H1 (cell line): ENCODE measurements at regions of chr3 and their contacts with region 1.

Region 1: GRCh38 chr3:187738331-187739093 is 6.8 kb downstream of the BCL6 start:
- DNase-seq: peak; percentile 85 to 86
- H3K4me3 ChIP-seq: peak overlapping the region; percentile 53 to 89 (median 83)
- H3K27ac ChIP-seq: peak overlapping the region; percentile 30; the same call in 1 of the 2 replicates
- H3K4me1 ChIP-seq: peaks cover 0 to 19% (median 8%) of the 10 kb centered on the region in 4 experiments; a peak in 5 of 7 replicates
- H3K27me3 ChIP-seq: peaks cover 0 to 16% (median 7%) of the 10 kb centered on the region in 4 experiments; a peak in 3 of 7 replicates
- CTCF ChIP-seq: peak; percentile 62 to 84 (median 72)
- EP300 ChIP-seq: 0 out of 3 replicates have a peak, but pooled peaks of 1 of the 2 experiments have one; percentile 8
- POLR2A ChIP-seq: no peak
- RAD21 ChIP-seq: peak; percentile 88 to 92

Region 2: DNA sequence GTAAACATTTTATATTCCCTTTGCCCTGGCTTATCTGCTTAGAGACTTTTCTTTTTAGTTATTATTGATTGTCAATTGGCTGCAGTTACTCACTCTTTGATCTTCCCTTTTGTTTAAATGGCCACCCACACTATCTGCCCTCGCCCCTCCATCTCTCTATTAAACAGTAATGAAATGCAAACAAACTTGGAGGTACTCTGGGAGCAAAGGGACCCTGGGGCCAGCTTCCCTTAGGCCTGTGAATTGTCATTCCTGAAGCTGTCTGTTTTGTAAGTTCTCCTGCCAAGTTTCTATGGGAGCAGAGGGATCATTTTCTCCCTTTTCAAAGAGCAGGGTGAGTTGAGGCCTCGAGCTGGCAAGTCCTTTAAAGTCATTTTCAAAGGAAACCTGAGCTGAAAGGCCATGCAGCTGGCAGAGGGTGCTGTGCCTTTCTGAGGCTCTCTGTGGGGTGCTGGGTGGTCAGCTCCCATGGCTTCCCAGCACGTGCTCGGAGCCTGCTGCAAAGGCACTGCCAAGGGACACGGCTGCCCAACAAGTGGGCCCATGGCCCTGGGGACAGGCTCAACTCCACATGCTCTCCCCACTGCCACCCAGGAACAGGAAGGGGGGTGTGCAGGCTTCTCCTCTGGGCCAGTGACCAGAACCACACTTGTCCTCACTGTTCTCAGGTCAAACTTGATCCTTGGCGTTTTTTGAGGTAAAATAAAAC is 18.7 kb before region 1 on chr3:
- CTCF ChIA-PET with region 1: interaction called, 45 read pairs
- POLR2A ChIA-PET with region 1: no interaction called
- DNase-seq: no peak
- H3K4me3 ChIP-seq: no peak overlapping the region
- H3K27ac ChIP-seq: no peak overlapping the region
- H3K4me1 ChIP-seq: peaks cover 0 to 13% (median 4%) of the 10 kb centered on the region in 4 experiments; a peak in 6 of 7 replicates
- H3K27me3 ChIP-seq: no peaks in the 10 kb centered on the region
- CTCF ChIP-seq: no peak
- EP300 ChIP-seq: no peak
- POLR2A ChIP-seq: no peak
- RAD21 ChIP-seq: no peak

Region 3: DNA sequence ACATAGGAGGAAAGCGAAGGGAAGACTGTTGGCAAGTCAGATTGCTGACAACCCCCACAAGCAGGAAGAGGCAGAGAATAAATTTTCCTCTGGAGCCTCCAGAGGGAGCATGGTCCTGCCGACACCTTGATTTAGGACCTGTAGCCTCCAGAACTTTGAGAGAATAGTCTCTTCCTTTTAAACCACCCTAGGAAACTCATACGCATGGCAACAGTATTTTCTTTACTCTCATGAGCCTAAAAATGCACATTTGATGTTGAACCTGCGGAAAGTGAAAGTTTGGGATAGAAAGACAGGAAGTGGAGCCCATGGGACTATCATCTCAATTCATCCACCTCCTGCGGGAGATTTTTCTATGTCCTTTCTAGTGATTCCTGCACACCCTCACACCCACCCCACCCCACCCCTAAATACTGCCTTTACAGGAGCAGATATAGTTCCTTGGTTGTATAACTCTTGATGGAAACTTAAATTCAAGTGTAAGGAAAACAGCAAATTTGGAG is 298.8 kb after region 1 on chr3:
- CTCF ChIA-PET with region 1: interaction called, 11 read pairs
- POLR2A ChIA-PET with region 1: no interaction called
- DNase-seq: no peak
- H3K4me3 ChIP-seq: no peak overlapping the region
- H3K27ac ChIP-seq: no peak overlapping the region
- H3K4me1 ChIP-seq: peaks cover 0 to 3% (median 0%) of the 10 kb centered on the region in 4 experiments; a peak in 5 of 7 replicates
- H3K27me3 ChIP-seq: no peaks in the 10 kb centered on the region
- CTCF ChIP-seq: peak; percentile 28 to 59 (median 46)
- EP300 ChIP-seq: no peak
- POLR2A ChIP-seq: no peak
- RAD21 ChIP-seq: peak; percentile 74 to 80

Region 4: GRCh38 chr3:188154014-188154808 is 415.7 kb after region 1 on chr3 and contains the start of gene LPP:
- CTCF ChIA-PET with region 1: interaction called, 16 read pairs
- POLR2A ChIA-PET with region 1: interaction called, 19 read pairs
- DNase-seq: peak; percentile 31 to 84
- H3K4me3 ChIP-seq: peak within 1 kb of the TSS; percentile 58 to 97 (median 69)
- H3K27ac ChIP-seq: peak within 1 kb of the TSS; percentile 84; the same call in 1 of the 2 replicates
- H3K4me1 ChIP-seq: peaks cover 4 to 13% (median 6%) of the 10 kb centered on the region in 4 experiments; a peak in 6 of 7 replicates
- H3K27me3 ChIP-seq: no peaks in the 10 kb centered on the region
- CTCF ChIP-seq: peak in 1 of 3 experiments; percentile 19; a peak in 1 of 4 replicates
- EP300 ChIP-seq: peak in 1 of 2 experiments; percentile 68; a peak in 1 of 3 replicates
- POLR2A ChIP-seq: peak; percentile 62 to 79
- RAD21 ChIP-seq: peak; percentile 23 to 36; a peak in 2 of 4 replicates
- total RNA-seq, gene LPP: 53.3 and 60.2 TPM in 2 replicates

Region 5: DNA sequence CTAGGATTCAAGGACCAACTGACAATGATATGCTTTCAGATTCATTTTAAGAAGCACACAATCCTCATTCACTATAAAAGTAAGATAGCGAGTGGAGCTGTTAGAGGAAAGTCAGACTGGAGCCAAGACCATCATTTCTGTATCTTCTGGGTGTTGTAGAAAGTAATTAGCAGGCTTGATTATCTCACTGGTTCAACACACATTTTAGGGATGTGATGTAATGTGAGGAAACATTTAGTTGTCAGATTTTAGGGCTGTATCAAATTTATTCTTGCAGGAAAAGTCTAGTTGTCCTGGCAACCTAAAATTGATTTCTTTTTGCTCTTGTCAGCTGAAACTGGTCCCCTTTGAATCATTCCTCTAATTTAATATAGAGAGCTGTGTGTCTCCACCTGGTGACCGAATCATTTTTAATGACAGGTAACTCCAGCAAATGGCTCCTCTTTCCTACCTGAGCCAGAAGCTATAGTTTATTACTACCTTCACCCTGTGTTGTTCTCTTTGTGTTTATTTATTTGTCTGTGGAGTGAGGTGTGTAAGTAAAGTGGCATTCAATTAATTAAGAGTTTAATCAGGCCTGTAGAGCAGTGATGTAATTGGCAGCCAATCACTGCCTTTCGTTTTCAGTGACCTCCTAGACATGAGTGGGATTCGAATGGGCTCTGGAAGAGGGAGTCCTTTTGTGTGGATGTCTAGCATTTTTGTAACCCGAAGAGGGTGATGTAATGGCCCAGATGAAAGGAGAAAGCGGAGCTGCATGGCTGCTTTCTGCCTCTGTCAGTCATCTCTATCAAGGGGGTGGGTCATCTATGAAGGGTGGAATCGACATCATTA is 541.2 kb after region 1 on chr3:
- CTCF ChIA-PET with region 1: interaction called, 12 read pairs
- POLR2A ChIA-PET with region 1: no interaction called
- DNase-seq: no peak
- H3K4me3 ChIP-seq: no peak overlapping the region
- H3K27ac ChIP-seq: no peak overlapping the region
- H3K4me1 ChIP-seq: peaks cover 0 to 9% (median 3%) of the 10 kb centered on the region in 4 experiments; a peak in 5 of 7 replicates
- H3K27me3 ChIP-seq: no peaks in the 10 kb centered on the region
- CTCF ChIP-seq: no peak
- EP300 ChIP-seq: no peak
- POLR2A ChIP-seq: no peak
- RAD21 ChIP-seq: peak in 1 of 2 experiments; percentile 29; a peak in 1 of 4 replicates

Region 6: GRCh38 chr3:188796122-188796631 is 1057.7 kb after region 1 on chr3:
- CTCF ChIA-PET with region 1: interaction called, 12 read pairs
- POLR2A ChIA-PET with region 1: no interaction called
- DNase-seq: no peak
- H3K4me3 ChIP-seq: no peak overlapping the region
- H3K27ac ChIP-seq: no peak overlapping the region
- H3K4me1 ChIP-seq: peaks cover 0 to 3% (median 1%) of the 10 kb centered on the region in 4 experiments; a peak in 2 of 7 replicates
- H3K27me3 ChIP-seq: no peaks in the 10 kb centered on the region
- CTCF ChIP-seq: no peak
- EP300 ChIP-seq: no peak
- POLR2A ChIP-seq: no peak
- RAD21 ChIP-seq: no peak

Region 7: DNA sequence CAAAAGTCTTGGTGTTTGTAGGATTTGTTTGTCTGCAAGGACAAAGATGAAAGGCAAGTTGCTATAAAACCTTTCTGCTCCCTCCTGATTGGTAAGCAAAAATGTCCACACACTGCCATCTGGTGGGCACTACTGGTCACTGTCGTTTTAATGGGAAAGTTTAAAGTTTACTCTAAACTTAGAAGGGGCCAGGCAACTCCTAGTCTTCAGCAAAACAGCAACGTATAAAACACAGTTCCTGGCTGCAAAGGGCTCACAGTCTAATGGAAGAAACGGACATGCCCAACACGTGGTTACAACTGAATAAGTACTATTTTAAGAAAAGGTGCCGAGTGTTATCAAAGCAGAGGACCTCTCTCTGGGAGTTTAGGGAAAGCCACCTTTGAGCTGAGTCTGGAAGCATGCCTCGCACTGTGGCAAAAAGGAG is 1409.6 kb after region 1 on chr3:
- CTCF ChIA-PET with region 1: interaction called, 10 read pairs
- POLR2A ChIA-PET with region 1: no interaction called
- DNase-seq: peak; percentile 9 to 79
- H3K4me3 ChIP-seq: no peak overlapping the region
- H3K27ac ChIP-seq: no peak overlapping the region
- H3K4me1 ChIP-seq: peaks cover 0 to 5% (median 1%) of the 10 kb centered on the region in 4 experiments; a peak in 3 of 7 replicates
- H3K27me3 ChIP-seq: no peaks in the 10 kb centered on the region
- CTCF ChIP-seq: peak in 2 of 3 experiments; percentile 64 to 84; a peak in 3 of 4 replicates
- EP300 ChIP-seq: no peak
- POLR2A ChIP-seq: no peak
- RAD21 ChIP-seq: peak; percentile 79 to 80